ENCODE measurements at regions of chr1 and their contacts with region 1.

Region 1: GRCh38 chr1:31348449-31348848 is 24.4 kb downstream of the FABP3 start:
- DNase-seq: no peak
- ATAC-seq: no peak

Region 2: GRCh38 chr1:31413405-31414125 is 65.1 kb after region 1 on chr1:
- intact Hi-C with region 1: loop called (anchors 10 kb)
- DNase-seq: peak; percentile 88
- ATAC-seq: peak; percentile 92

Measured in Right ventricle myocardium superior (tissue), 1 donor.